Aorta (tissue), 5 donors: ENCODE measurements at regions of chr1 and their contacts with region 1.

Region 1: DNA sequence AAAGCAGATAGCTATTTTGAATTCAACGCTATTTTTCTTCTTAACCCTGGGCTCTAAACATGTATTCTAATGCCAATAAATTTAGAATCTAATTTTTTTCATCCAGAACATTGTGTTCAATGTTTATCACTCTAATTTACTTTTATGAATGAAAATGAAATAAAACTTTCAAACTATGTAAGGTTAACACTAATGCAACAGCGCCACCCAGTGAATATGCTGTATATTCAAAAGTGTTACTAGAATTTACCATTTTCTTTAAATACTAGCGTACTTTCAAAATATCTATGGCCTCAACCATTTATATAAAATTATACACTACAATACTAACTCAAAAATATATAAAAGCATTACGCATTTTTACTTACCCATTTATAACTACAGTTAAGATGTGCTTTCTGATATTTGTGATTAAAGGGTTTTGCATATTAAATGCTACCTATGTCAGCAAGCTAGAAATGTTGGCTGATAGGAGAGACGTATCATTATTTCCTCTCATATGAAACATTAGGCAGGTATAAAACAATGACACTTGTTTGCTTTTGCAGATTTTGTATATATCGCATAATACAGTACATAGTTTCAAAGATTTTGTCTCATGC is 5.9 kb upstream of the NUF2 start:
- DNase-seq: no peak
- ATAC-seq: peak; percentile 56
- H3K4me3 ChIP-seq: no peak overlapping the region
- H3K27ac ChIP-seq: no peak overlapping the region
- H3K4me1 ChIP-seq: peaks cover 0 to 2% of the 10 kb centered on the region in 2 donors
- H3K27me3 ChIP-seq: no peaks in the 10 kb centered on the region

Region 2: DNA sequence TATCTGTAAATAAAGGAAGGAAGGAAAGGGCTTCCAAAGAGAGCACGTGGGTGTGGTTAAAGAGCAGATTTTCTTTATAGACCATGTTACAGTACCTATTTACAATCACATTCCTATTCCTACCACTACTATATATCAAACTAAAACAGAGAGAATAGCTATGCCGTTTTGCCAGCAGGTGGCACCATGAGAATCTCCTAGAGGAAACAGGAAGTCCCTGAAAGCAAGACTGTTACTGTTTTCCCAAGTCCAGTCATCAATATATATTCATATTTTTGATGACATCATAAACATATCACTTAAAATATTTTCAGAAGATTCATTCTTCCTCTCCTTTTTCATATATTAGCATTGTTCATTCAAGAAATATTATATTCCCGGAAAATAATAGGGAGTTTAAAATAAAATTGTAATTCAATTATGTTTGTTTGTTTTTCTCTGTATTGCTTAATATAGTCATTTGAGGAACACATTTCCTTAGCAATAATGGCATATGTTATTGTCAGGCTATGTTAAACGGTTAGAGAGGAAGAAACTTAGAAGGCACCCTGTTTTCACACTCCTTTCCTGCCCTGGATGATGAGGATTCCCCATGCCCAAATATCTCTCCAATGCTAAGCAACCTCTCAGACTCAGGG is 461.5 kb before region 1 on chr1:
- intact Hi-C with region 1: loop called (anchors 5 kb)
- DNase-seq: peak; percentile 76 to 82
- ATAC-seq: no peak
- H3K4me3 ChIP-seq: no peak overlapping the region
- H3K27ac ChIP-seq: peak overlapping the region in 1 of 2 donors; percentile 73
- H3K4me1 ChIP-seq: peaks cover 10 to 12% of the 10 kb centered on the region in 2 donors
- H3K27me3 ChIP-seq: no peaks in the 10 kb centered on the region

Region 3: DNA sequence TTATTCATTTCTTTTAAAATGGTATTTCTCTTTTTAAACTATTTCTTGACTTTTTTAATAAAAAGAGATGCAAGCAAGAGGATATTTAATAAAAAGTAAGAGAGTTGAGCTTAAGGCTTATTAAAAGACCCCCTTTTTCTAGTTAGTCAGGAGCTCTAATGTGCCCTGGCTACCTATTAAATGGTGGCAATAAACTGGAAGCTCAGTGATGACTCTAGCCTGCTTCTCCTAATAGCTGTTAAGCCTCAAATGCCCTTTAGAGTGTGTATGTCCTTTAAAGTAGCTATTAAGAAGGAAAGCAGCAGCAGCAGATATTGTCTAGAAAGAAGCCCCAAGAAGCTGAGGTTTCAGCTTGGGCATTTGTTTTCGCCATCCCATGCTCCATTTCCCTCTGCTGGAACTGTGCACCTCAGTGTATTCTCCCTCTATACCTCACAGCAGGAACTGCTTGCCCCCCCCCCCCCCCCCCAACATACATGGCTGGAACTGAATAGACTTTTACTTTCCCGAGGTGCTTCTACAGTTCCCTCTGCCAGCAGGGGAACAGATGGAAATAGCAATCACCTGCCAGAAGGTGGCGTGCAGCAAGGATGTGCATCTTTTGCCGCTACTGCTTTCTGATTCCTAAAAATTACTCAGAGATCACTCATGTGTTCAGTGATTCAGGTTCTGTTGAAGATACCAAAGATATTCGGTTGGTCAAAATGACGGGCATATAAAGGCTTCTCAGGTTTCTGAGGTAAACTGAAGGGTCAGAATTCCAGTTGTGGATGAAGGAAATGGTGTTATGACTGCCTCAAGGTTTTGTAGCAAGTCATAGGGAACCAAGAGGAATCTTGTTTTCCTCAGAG is 244.2 kb before region 1 on chr1:
- intact Hi-C with region 1: loop called (anchors 2 to 5 kb)
- DNase-seq: peak; percentile 75 to 86
- ATAC-seq: peak; percentile 55
- H3K4me3 ChIP-seq: peak overlapping the region; percentile 35 to 72
- H3K27ac ChIP-seq: peak overlapping the region; percentile 43 to 67
- H3K4me1 ChIP-seq: peaks cover 4 to 8% of the 10 kb centered on the region in 2 donors
- H3K27me3 ChIP-seq: no peaks in the 10 kb centered on the region

Region 4: GRCh38 chr1:163155606-163156005 is 160.3 kb before region 1 on chr1:
- intact Hi-C with region 1: no loop called
- DNase-seq: no peak
- ATAC-seq: no peak
- H3K4me3 ChIP-seq: peak overlapping the region in 1 of 2 donors; percentile 18
- H3K27ac ChIP-seq: peak overlapping the region in 1 of 2 donors; percentile 75
- H3K4me1 ChIP-seq: peaks cover 3 to 6% of the 10 kb centered on the region in 2 donors
- H3K27me3 ChIP-seq: no peaks in the 10 kb centered on the region

Region 5: GRCh38 chr1:163186862-163187261 is 129.0 kb before region 1 on chr1:
- intact Hi-C with region 1: loop called in 1 of 2 experiments (anchors 5 kb)
- DNase-seq: no peak
- ATAC-seq: no peak
- H3K4me3 ChIP-seq: no peak overlapping the region
- H3K27ac ChIP-seq: peak overlapping the region; percentile 28 to 51
- H3K4me1 ChIP-seq: peaks cover 3 to 15% of the 10 kb centered on the region in 2 donors
- H3K27me3 ChIP-seq: no peaks in the 10 kb centered on the region